HepG2 (cell line): ENCODE measurements at regions of chr17 and their contacts with region 1.

Region 1: GRCh38 chr17:8222630-8223356 is 12.4 kb upstream of the AURKB start:
- DNase-seq: peak; percentile 88
- ATAC-seq: peak; percentile 64
- H3K4me3 ChIP-seq: peak overlapping the region; percentile 69 to 85 (median 70)
- H3K27ac ChIP-seq: peak overlapping the region; percentile 91
- H3K4me1 ChIP-seq: peaks cover 33% of the 10 kb centered on the region
- H3K27me3 ChIP-seq: no peaks in the 10 kb centered on the region; a peak in 1 of 5 replicates
- CTCF ChIP-seq: no peak
- EP300 ChIP-seq: no peak
- POLR2A ChIP-seq: peak; percentile 53 to 78; a peak in 3 of 4 replicates
- RAD21 ChIP-seq: peak; percentile 31

Region 2: GRCh38 chr17:8091033-8091687 is 131.6 kb before region 1 on chr17:
- CTCF ChIA-PET with region 1: no interaction called
- POLR2A ChIA-PET with region 1: no interaction called
- in situ Hi-C with region 1: no loop called
- intact Hi-C with region 1: no loop called
- DNase-seq: no peak
- ATAC-seq: no peak
- H3K4me3 ChIP-seq: no peak overlapping the region
- H3K27ac ChIP-seq: no peak overlapping the region
- H3K4me1 ChIP-seq: no peaks in the 10 kb centered on the region; the same call in 1 of the 2 replicates
- H3K27me3 ChIP-seq: peaks cover 9 to 71% of the 10 kb centered on the region in 2 experiments; a peak in 4 of 5 replicates
- CTCF ChIP-seq: no peak
- EP300 ChIP-seq: no peak
- POLR2A ChIP-seq: no peak
- RAD21 ChIP-seq: no peak

Region 3: GRCh38 chr17:8118769-8119580 is 103.8 kb before region 1 on chr17:
- CTCF ChIA-PET with region 1: no interaction called
- POLR2A ChIA-PET with region 1: interaction called, 8 read pairs
- in situ Hi-C with region 1: no loop called
- intact Hi-C with region 1: loop called (anchors 1 kb)
- DNase-seq: peak; percentile 77
- ATAC-seq: peak; percentile 75
- H3K4me3 ChIP-seq: peak overlapping the region; percentile 68 to 95 (median 94)
- H3K27ac ChIP-seq: peak overlapping the region; percentile 10
- H3K4me1 ChIP-seq: peaks cover 52% of the 10 kb centered on the region
- H3K27me3 ChIP-seq: peaks cover 6 to 58% of the 10 kb centered on the region in 2 experiments
- CTCF ChIP-seq: peak; percentile 81
- EP300 ChIP-seq: no peak
- POLR2A ChIP-seq: no peak
- RAD21 ChIP-seq: peak; percentile 53; the same call in 1 of the 2 replicates

Region 4: GRCh38 chr17:8209909-8210760 is 12.7 kb before region 1 on chr17 and contains the start of gene AURKB:
- CTCF ChIA-PET with region 1: no interaction called
- POLR2A ChIA-PET with region 1: interaction called, 89 read pairs
- in situ Hi-C with region 1: no loop called
- intact Hi-C with region 1: no loop called
- DNase-seq: peak; percentile 96
- ATAC-seq: peak; percentile 82
- H3K4me3 ChIP-seq: peak within 1 kb of the TSS; percentile 71 to 87 (median 75)
- H3K27ac ChIP-seq: peak within 1 kb of the TSS; percentile 91
- H3K4me1 ChIP-seq: peaks cover 41% of the 10 kb centered on the region
- H3K27me3 ChIP-seq: no peaks in the 10 kb centered on the region; a peak in 1 of 5 replicates
- CTCF ChIP-seq: no peak
- EP300 ChIP-seq: no peak
- POLR2A ChIP-seq: peak; percentile 88 to 89
- RAD21 ChIP-seq: no peak
- total RNA-seq, gene AURKB: 67.7 and 75.3 TPM in 2 replicates

Region 5: DNA sequence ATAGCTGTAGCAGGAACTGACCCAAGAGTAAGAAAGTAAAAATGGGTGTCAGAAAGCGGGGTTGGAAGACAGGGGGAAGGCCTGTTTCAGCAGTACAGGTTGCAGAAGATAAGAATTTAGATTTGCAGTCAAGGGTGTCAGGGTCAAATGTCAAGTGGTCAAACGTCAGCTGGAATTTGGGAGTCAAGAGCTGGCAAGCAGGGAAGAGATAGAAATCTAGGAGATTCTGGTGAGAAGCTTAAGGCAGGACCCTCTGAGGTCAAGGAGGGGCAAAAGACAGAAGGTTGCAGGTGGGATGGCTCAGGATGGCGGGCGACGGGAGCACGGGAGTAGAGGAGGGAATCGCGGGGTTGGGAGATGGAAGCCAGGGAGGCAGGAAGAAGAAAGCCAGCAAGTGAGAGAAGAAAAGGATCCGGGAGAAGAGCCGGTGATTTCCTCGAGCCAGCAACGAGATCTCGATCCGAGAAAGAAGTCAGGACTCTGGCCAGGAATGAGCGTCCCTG is 72.1 kb after region 1 on chr17:
- CTCF ChIA-PET with region 1: no interaction called
- POLR2A ChIA-PET with region 1: interaction called, 25 read pairs
- in situ Hi-C with region 1: loop called (anchors 5 kb)
- intact Hi-C with region 1: loop called (anchors 1 kb)
- DNase-seq: no peak
- ATAC-seq: peak; percentile 18
- H3K4me3 ChIP-seq: peak overlapping the region; percentile 60 to 79 (median 72)
- H3K27ac ChIP-seq: peak overlapping the region; percentile 88
- H3K4me1 ChIP-seq: peaks cover 45% of the 10 kb centered on the region
- H3K27me3 ChIP-seq: no peaks in the 10 kb centered on the region
- CTCF ChIP-seq: no peak
- EP300 ChIP-seq: no peak
- POLR2A ChIP-seq: peak in 1 of 2 experiments; percentile 67; a peak in 2 of 4 replicates
- RAD21 ChIP-seq: no peak

Region 6: DNA sequence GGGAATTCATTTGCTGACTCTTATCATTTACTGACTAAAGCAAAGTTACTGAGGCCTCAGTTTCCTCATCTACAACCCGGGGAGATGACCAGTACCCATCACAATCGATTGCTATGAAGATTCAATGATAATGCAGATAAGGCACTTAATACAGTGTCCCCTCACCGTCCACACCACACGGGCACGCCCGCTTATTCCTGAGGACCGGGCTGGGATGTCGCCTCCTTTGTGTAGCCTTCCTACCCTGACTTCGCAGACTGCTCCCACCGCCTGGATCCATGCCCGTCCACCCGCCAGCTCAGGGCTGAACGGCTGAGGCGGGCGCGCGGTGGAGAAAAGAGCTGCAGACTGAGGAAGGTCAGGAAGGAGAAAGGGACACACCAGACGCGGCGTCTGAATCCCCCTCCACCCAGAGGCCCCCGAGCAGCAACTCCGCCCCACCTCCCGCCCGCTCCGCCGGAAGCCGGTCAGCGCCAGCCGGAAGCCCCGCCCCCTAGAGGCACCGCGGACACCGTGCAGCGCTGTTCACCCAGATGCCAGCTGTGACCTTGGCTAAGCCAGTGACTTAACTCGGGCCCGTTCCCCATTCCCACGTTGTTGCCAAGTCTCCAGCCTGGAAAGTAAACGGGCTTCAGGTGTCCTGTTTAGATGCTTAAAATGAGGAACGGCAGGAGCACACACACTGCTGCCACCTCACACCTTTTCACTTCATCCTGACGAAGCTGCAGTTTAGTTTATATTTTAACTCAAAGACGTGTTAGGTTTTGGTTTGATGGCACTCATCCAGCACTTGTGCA is 153.7 kb after region 1 on chr17 and contains the start of gene KRABD2:
- CTCF ChIA-PET with region 1: no interaction called
- POLR2A ChIA-PET with region 1: interaction called, 10 read pairs
- in situ Hi-C with region 1: no loop called
- intact Hi-C with region 1: loop called (anchors 5 kb)
- DNase-seq: peak; percentile 87
- ATAC-seq: peak; percentile 96
- H3K4me3 ChIP-seq: peak within 1 kb of the TSS; percentile 66 to 85 (median 80)
- H3K27ac ChIP-seq: peak within 1 kb of the TSS; percentile 75
- H3K4me1 ChIP-seq: peaks cover 56% of the 10 kb centered on the region
- H3K27me3 ChIP-seq: peaks cover 0 to 3% of the 10 kb centered on the region in 2 experiments; a peak in 1 of 5 replicates
- CTCF ChIP-seq: peak; percentile 86
- EP300 ChIP-seq: no peak
- POLR2A ChIP-seq: peak; percentile 78 to 94
- RAD21 ChIP-seq: peak; percentile 60; the same call in 1 of the 2 replicates